ENCODE measurements at regions of chr9 and their contacts with region 1.

Region 1: DNA sequence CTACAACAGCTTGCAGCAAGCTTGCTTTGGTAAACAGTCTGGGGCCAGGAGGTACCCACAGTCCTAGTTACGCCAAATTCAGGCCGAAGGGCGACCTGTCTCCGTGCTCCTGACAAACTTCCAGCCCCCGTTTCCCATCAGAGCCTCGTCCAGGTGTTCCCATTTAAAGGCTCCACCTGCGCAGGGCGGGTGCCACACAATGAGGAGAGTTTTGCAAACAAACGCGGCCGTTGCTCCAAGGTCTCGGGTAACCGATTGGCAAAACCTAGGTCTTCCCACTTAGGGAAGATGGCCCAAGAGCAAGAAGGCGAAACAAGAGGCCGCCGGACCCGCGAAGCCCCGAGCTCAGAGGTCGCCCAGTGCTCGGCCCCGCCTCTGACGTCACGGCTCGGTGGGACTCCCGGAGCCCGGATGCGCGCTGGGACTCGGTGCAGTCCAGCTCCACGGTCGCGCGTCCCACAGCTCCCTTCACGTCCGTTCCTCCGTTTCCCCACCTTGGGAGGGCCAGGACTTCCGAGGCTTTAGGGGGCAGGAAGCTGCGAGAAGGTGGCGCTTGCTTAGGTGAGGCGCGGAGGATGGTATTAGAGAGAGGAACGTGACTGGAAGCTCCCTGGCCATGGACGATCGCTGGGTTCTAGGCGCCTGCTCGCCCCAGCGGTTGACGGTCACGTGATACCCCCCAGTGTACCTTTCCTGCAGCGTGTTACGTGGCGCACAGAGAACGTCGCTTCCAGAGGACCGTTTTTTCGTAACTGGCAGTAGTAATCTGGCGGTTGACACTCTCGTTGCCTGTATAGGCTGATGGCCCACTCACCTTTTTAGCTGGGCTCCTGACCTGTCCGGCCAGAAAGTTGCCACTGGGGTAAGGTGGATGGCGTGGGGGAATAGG is 41.8 kb upstream of the KDM4C start:
- DNase-seq: peak; percentile 81
- ATAC-seq: peak; percentile 85
- H3K4me3 ChIP-seq: peak overlapping the region; percentile 13 to 77 (median 60)
- H3K4me3 Mint-ChIP-seq: peak overlapping the region; percentile 90
- H3K27ac ChIP-seq: peak overlapping the region; percentile 58 to 76
- H3K27ac Mint-ChIP-seq: peak overlapping the region; percentile 91
- H3K4me1 ChIP-seq: peaks cover 6 to 16% of the 10 kb centered on the region in 2 donors
- H3K4me1 Mint-ChIP-seq: peaks cover 17% of the 10 kb centered on the region
- H3K27me3 ChIP-seq: no peaks in the 10 kb centered on the region
- H3K27me3 Mint-ChIP-seq: no peaks in the 10 kb centered on the region
- CTCF ChIP-seq: no peak

Region 2: GRCh38 chr9:6664204-6664680 is 51.8 kb before region 1 on chr9:
- CTCF ChIA-PET with region 1: no interaction called
- POLR2A ChIA-PET with region 1: no interaction called
- intact Hi-C with region 1: no loop called
- DNase-seq: no peak
- ATAC-seq: no peak
- H3K4me3 ChIP-seq: no peak overlapping the region
- H3K4me3 Mint-ChIP-seq: no peak overlapping the region
- H3K27ac ChIP-seq: no peak overlapping the region
- H3K27ac Mint-ChIP-seq: no peak overlapping the region
- H3K4me1 ChIP-seq: no peaks in the 10 kb centered on the region
- H3K4me1 Mint-ChIP-seq: peaks cover 4% of the 10 kb centered on the region
- H3K27me3 ChIP-seq: no peaks in the 10 kb centered on the region
- H3K27me3 Mint-ChIP-seq: no peaks in the 10 kb centered on the region
- CTCF ChIP-seq: no peak

Region 3: DNA sequence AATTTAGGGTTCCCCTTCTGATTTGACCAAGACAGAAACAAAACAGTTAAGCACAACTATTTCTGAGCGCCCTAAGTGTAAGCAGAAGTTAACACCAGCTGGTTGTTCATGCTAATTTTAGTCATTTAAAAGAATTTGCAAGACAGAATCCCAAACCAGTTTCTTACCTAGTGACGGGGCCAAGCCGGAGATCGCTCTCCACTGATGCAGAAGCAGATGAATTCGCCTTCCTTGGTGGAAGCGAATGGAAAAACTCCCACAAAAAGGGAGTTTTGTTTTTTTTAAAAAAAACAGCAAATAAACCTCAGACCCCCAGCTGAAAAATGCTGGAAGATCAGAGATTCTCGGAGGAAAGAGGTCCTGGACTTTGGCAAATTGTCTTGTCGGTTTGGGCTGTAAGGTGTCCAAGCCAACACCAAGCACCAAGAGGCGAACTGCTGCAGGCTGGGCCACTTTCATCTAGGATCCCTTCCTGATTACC is 23.1 kb before region 1 on chr9:
- CTCF ChIA-PET with region 1: interaction called, 3 read pairs
- POLR2A ChIA-PET with region 1: interaction called, 13 read pairs
- intact Hi-C with region 1: loop called (anchors 2 kb)
- DNase-seq: peak; percentile 55
- ATAC-seq: peak; percentile 28
- H3K4me3 ChIP-seq: peak overlapping the region in 4 of 5 experiments; percentile 14 to 62 (median 28)
- H3K4me3 Mint-ChIP-seq: peak overlapping the region; percentile 87
- H3K27ac ChIP-seq: peak overlapping the region; percentile 79 to 95
- H3K27ac Mint-ChIP-seq: peak overlapping the region; percentile 97
- H3K4me1 ChIP-seq: peaks cover 76 to 83% of the 10 kb centered on the region in 2 donors
- H3K4me1 Mint-ChIP-seq: peaks cover 65% of the 10 kb centered on the region
- H3K27me3 ChIP-seq: no peaks in the 10 kb centered on the region
- H3K27me3 Mint-ChIP-seq: no peaks in the 10 kb centered on the region
- CTCF ChIP-seq: no peak

Region 4: GRCh38 chr9:6703898-6704639 is 11.9 kb before region 1 on chr9:
- CTCF ChIA-PET with region 1: interaction called, 4 read pairs
- POLR2A ChIA-PET with region 1: interaction called, 13 read pairs
- intact Hi-C with region 1: loop called (anchors 1 kb)
- DNase-seq: peak; percentile 96
- ATAC-seq: peak; percentile 80
- H3K4me3 ChIP-seq: peak overlapping the region; percentile 70 to 98 (median 75)
- H3K4me3 Mint-ChIP-seq: peak overlapping the region; percentile 99
- H3K27ac ChIP-seq: peak overlapping the region; percentile 98 to 100
- H3K27ac Mint-ChIP-seq: peak overlapping the region; percentile 100
- H3K4me1 ChIP-seq: peaks cover 16 to 28% of the 10 kb centered on the region in 2 donors
- H3K4me1 Mint-ChIP-seq: peaks cover 29% of the 10 kb centered on the region
- H3K27me3 ChIP-seq: no peaks in the 10 kb centered on the region
- H3K27me3 Mint-ChIP-seq: no peaks in the 10 kb centered on the region
- CTCF ChIP-seq: no peak

Region 5: DNA sequence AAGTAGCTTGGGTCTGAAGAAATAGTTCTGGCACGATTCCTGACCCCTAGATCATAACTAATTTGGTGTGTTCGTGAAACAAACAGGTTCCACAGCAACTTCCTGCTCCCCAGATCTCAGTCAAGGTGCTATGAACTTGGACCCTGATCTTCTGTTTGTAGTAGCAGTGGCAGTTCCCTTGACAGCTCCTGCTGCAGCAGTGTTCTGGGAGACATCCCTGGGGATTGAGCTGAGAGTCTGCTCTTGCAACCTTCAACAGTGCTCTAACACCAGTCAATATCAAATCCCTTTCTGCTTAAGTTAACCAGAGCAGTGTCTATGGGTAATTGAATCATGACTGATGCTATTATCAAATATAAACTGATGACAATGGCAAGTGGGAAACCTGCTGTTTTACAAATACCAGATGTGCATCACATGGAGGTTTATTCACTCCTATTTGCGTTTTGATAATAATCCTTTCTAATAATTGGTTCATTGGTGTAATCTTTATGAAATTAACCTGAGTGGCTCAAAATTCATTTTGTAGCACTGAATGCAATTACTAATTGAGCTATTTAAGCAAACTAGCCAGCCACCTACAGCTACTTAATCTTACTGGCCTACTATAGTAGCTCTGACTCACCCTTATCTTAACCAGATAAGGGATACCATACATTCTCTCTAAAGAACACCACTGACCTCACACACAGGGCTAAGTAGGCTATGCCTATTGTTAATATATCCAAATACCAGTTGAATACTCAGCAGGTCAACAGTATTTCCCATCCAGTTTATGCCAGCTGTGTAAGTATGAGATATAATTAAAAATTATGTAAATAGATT is 63.6 kb after region 1 on chr9:
- CTCF ChIA-PET with region 1: no interaction called
- POLR2A ChIA-PET with region 1: no interaction called
- intact Hi-C with region 1: no loop called
- DNase-seq: peak; percentile 23
- ATAC-seq: peak; percentile 21
- H3K4me3 ChIP-seq: peak overlapping the region in 1 of 5 experiments; percentile 24
- H3K4me3 Mint-ChIP-seq: peak overlapping the region; percentile 38
- H3K27ac ChIP-seq: peak overlapping the region in 1 of 2 donors; percentile 61
- H3K27ac Mint-ChIP-seq: peak overlapping the region; percentile 81
- H3K4me1 ChIP-seq: peaks cover 67 to 70% of the 10 kb centered on the region in 2 donors
- H3K4me1 Mint-ChIP-seq: peaks cover 74% of the 10 kb centered on the region
- H3K27me3 ChIP-seq: no peaks in the 10 kb centered on the region
- H3K27me3 Mint-ChIP-seq: no peaks in the 10 kb centered on the region
- CTCF ChIP-seq: no peak

Region 6: GRCh38 chr9:7153566-7153965 is 437.6 kb after region 1 on chr9:
- CTCF ChIA-PET with region 1: no interaction called
- POLR2A ChIA-PET with region 1: no interaction called
- intact Hi-C with region 1: no loop called
- DNase-seq: no peak
- ATAC-seq: no peak
- H3K4me3 ChIP-seq: no peak overlapping the region
- H3K4me3 Mint-ChIP-seq: no peak overlapping the region
- H3K27ac ChIP-seq: no peak overlapping the region
- H3K27ac Mint-ChIP-seq: no peak overlapping the region
- H3K4me1 ChIP-seq: peaks cover 19% of the 10 kb centered on the region in 2 donors
- H3K4me1 Mint-ChIP-seq: peaks cover 36% of the 10 kb centered on the region
- H3K27me3 ChIP-seq: no peaks in the 10 kb centered on the region
- H3K27me3 Mint-ChIP-seq: no peaks in the 10 kb centered on the region
- CTCF ChIP-seq: no peak

Measured in B cell (primary cell).